ENCODE measurements at regions of chr11 and their contacts with region 1.

Region 1: GRCh38 chr11:36354221-36355003 is 58.3 kb downstream of the PRR5L start:
- DNase-seq: peak; percentile 71
- H3K4me3 Mint-ChIP-seq: peak overlapping the region; percentile 48
- H3K27ac Mint-ChIP-seq: peak overlapping the region; percentile 81
- H3K4me1 Mint-ChIP-seq: peaks cover 66% of the 10 kb centered on the region
- H3K27me3 Mint-ChIP-seq: peaks cover 2% of the 10 kb centered on the region

Region 2: GRCh38 chr11:36230779-36231699 is 123.4 kb before region 1 on chr11:
- intact Hi-C with region 1: no loop called
- DNase-seq: no peak
- H3K4me3 Mint-ChIP-seq: no peak overlapping the region
- H3K27ac Mint-ChIP-seq: no peak overlapping the region
- H3K4me1 Mint-ChIP-seq: no peaks in the 10 kb centered on the region
- H3K27me3 Mint-ChIP-seq: peaks cover 9% of the 10 kb centered on the region

Region 3: DNA sequence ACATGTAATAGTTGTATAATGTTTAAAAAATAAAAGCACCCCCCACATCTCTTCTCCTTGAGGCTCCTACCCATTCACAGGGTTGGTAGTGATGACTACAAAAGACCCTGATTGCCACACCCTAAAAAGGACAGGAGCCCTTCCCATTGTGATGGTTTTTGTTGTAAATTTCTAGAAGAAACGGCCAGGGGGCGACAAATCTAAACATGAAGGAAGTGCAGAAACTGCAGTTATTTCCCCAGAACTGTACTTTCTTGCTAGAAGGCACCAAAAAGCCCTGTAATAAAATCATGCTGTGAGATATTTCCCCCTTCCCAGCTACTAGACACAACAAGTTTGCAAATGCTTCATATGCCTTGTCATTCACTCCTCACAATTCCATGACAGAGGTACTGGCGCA is 47.5 kb before region 1 on chr11:
- intact Hi-C with region 1: loop called (anchors 1 kb)
- DNase-seq: peak; percentile 72
- H3K4me3 Mint-ChIP-seq: no peak overlapping the region
- H3K27ac Mint-ChIP-seq: no peak overlapping the region
- H3K4me1 Mint-ChIP-seq: peaks cover 4% of the 10 kb centered on the region
- H3K27me3 Mint-ChIP-seq: peaks cover 8% of the 10 kb centered on the region

Region 4: DNA sequence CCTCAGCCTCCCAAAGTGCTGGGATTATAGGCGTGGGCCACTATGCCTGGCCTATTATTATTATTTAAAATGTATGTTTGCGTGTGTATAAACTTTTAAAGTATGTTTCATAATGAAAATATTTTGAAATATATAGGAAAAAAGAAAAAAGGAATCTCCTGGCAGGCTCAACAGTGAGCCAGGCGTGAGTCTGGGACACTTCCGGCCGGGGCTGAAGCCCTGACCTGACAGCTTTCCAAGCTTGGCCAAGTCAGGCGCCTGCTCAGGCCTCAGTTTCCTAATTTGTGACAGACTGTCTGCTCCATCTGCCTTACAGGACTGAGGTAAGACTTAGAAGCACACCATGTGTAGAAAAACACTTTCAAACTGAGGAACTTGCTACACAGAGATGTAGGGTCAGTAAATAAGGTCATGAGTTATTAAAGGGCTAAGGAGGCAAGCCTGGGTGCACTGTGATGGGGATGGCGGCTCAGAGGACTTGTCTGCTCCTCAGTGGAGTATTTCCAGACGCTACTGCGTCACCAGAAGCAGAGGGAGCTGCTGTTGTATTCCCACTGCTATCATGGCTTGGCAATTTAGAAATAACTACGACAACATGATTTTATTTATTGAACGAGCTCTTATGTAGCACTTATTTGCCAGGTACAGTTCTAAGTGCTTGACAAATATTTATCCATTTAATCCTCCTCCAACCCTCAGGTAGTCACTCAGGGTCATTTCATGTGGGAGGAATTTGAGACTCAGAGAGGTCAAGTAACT is 41.7 kb after region 1 on chr11:
- intact Hi-C with region 1: loop called (anchors 1 kb)
- DNase-seq: no peak
- H3K4me3 Mint-ChIP-seq: no peak overlapping the region
- H3K27ac Mint-ChIP-seq: no peak overlapping the region
- H3K4me1 Mint-ChIP-seq: peaks cover 63% of the 10 kb centered on the region
- H3K27me3 Mint-ChIP-seq: no peaks in the 10 kb centered on the region

Region 5: DNA sequence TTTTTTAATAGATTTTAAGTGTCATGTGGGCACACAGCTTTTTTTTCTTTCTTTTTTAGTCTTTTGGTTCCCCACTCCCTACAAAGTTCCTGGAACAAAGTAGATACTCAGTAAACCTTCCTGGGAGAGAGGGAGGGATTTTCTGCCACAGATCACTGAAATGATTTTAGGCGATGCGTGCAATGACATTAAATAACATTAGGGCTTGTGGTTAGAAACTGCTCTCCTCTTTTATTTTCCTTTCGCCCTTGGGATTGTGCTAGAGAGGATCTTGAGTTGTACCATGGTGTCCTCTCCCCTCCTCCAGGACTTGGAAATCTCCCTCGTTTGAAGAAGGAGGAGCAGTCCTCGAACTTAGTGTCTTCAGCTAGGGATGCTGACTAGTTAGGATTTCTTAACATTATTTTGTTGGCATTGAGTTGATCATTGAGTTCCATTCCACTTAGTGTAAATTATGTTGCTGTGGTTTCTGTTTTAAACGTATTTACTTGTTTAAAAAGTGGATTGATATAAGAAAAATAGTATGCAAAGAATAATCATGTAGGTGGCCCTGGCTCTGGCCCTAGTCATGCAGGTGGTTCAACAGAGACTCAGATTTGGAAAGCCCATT is 67.2 kb after region 1 on chr11:
- intact Hi-C with region 1: loop called (anchors 1 kb)
- DNase-seq: no peak
- H3K4me3 Mint-ChIP-seq: peak overlapping the region; percentile 75
- H3K27ac Mint-ChIP-seq: peak overlapping the region; percentile 91
- H3K4me1 Mint-ChIP-seq: peaks cover 63% of the 10 kb centered on the region
- H3K27me3 Mint-ChIP-seq: no peaks in the 10 kb centered on the region

Region 6: GRCh38 chr11:36492724-36493304 is 138.4 kb after region 1 on chr11:
- intact Hi-C with region 1: loop called (anchors 1 kb)
- DNase-seq: peak; percentile 79
- H3K4me3 Mint-ChIP-seq: no peak overlapping the region
- H3K27ac Mint-ChIP-seq: no peak overlapping the region
- H3K4me1 Mint-ChIP-seq: peaks cover 16% of the 10 kb centered on the region
- H3K27me3 Mint-ChIP-seq: no peaks in the 10 kb centered on the region

Measured in activated CD4-positive, alpha-beta T cell treated with anti-CD3 and anti-CD28 coated beads, Interleukin-2, amount 10 ng/mL, durations not matched to agents 24 days and 14 days (primary cell).